ENCODE measurements at regions of chr12 and their contacts with region 1.

Region 1: GRCh38 chr12:12724661-12725545 is 7.7 kb downstream of the CDKN1B start:
- DNase-seq: peak; percentile 95 to 96
- ATAC-seq: peak; percentile 91
- H3K4me3 ChIP-seq: peak overlapping the region; percentile 47 to 96
- H3K27ac ChIP-seq: peak overlapping the region; percentile 62 to 73
- H3K4me1 ChIP-seq: no peaks in the 10 kb centered on the region
- H3K27me3 ChIP-seq: no peaks in the 10 kb centered on the region

Region 2: DNA sequence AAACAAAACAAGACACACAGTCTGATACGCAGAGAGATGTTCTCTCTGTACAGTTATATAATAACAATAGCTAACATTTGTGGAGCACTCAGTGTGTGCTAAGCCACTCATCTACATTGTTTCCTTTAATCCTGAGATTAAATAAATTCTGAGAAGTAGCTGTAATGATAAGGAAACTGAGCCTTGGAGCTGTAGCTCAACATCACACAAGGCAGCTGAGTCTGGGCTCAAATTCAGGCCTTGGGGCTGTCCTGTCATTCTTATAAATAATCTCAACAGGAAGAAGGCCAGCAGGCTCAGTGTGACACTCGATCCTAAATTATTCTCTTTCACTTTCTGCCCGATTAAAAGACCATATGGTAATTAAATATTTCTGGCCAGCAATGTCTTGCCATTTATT is 16.8 kb after region 1 on chr12:
- intact Hi-C with region 1: no loop called
- DNase-seq: no peak
- ATAC-seq: no peak
- H3K4me3 ChIP-seq: no peak overlapping the region
- H3K27ac ChIP-seq: no peak overlapping the region
- H3K4me1 ChIP-seq: no peaks in the 10 kb centered on the region
- H3K27me3 ChIP-seq: no peaks in the 10 kb centered on the region

Region 3: DNA sequence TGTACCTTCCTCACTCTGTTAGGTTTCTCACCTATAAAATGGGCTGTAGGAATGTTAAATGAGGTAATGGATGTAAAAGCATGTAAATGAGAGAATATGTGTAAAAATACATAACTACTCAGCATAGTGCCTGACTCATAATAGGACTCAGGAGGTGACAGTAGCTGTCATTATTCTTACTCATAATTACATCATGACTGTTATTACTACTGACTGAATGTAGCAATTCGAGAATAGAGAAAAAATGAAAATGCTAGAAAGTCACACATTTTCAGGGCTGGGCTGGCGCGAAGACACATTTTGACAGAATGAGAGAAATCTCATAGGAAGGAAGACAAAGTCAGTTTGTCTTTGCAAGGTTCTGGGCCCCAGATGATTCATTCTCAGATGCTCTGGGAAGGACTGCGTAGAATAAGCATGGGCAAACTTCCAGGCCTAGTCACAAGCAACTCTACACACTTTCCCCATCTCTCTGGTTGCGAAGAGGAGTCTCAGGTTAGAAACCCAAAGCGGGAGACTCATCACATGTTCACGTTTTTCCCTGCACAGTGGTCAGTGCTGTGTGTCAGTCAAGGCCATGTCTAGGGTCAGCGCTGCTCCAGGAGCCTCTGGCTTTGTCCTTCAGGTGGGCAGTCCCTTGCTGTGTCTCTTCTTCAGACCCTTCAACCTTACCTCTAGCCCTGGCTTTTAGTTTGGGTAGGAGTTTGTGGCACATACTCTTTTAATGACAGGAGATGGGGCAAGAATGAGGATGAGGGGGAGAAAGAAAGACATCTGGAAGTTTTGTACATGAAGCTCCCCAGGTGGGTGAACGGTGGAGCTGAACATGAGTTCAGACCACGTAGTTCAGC is 174.9 kb after region 1 on chr12:
- intact Hi-C with region 1: loop called in 1 of 2 experiments (anchors 10 kb)
- DNase-seq: peak in 1 of 2 donors; percentile 55
- ATAC-seq: no peak
- H3K4me3 ChIP-seq: no peak overlapping the region
- H3K27ac ChIP-seq: peak overlapping the region; percentile 89 to 91
- H3K4me1 ChIP-seq: peaks cover 2 to 7% of the 10 kb centered on the region in 2 donors
- H3K27me3 ChIP-seq: no peaks in the 10 kb centered on the region